ENCODE measurements at regions of chr2 and their contacts with region 1.

Region 1: DNA sequence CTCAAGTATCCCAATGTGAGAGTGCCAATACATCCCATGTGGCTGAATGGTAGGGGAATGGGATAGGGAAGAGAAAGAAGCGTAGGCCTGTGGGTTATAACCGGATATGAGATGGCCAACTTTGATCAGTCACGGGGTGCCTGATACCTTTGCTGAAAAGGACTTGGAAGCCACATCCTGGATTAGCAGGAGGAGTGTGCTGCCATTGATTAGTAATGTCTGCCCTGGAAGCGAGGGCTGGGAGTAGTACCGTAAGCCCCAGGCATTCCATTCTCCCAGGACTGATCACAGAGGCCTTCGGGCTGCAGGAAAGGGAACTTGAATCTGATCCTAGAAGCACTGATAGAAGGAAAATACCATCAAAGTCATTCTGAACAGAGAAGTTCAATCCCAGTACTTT is 218.5 kb downstream of the TFCP2L1 start:
- DNase-seq: no peak
- H3K4me3 ChIP-seq: no peak overlapping the region
- CTCF ChIP-seq: no peak

Region 2: GRCh38 chr2:120703330-120703994 is 363.1 kb before region 1 on chr2:
- in situ Hi-C with region 1: loop called (anchors 5 kb)
- DNase-seq: no peak
- H3K4me3 ChIP-seq: no peak overlapping the region
- CTCF ChIP-seq: no peak

Measured in astrocyte of the cerebellum (primary cell).